ENCODE measurements at regions of chr6 and their contacts with region 1.

Region 1: DNA sequence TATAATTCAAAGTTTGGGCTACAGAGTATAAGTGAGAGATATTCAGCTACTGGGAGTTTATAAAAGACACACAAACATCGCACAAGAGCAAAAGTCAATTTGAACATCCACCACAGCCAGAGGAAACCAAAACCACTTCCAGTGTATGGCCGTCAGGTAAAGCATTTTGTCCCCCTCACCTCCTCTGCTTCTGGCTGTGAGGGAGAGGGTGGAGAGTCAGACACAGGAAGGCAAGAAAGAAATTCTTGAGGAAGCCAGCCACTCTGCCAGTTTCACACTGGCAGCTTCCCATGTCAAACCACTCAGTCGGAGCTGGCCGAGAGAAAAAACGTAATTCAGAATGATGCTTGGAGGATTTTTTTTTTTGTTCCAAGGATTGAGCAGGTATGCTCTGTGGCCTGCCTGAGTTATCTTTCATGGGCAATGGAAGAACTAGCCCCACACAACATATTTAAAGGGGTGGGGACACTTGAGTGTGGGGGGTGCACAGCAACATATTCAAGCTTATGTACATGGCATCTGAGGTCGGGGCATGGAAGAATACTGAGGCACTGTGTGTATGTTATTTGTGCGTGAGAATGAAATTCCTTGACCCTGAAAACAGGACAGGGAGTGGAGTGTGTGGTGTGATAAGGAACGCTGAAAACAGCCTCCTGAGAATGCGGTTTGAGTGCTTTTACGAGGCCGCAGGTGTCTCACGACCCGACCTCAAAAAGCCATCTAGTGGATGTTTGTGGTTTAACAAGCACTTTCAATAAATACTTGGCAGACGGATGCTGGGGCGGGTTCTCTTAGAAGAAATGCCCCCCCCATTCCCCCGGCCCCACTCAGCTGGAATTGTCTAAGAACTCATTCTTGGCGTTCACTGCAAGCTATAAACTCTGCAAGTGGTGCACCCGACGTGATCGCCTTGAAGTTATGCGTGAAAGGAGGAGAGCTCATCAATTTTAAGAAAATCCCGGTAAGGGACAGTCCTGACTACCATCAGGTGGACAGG is 27.5 kb upstream of the ZBTB22 start:
- DNase-seq: peak; percentile 31
- ATAC-seq: peak; percentile 35
- H3K4me3 Mint-ChIP-seq: peak overlapping the region; percentile 80
- H3K27ac Mint-ChIP-seq: peak overlapping the region; percentile 92
- H3K4me1 Mint-ChIP-seq: peaks cover 35% of the 10 kb centered on the region
- H3K27me3 Mint-ChIP-seq: no peaks in the 10 kb centered on the region
- CTCF ChIP-seq: no peak

Region 2: GRCh38 chr6:32933636-32934085 is 411.3 kb before region 1 on chr6:
- CTCF ChIA-PET with region 1: no interaction called
- POLR2A ChIA-PET with region 1: no interaction called
- intact Hi-C with region 1: no loop called
- DNase-seq: peak; percentile 60
- ATAC-seq: peak; percentile 54
- H3K4me3 Mint-ChIP-seq: no peak overlapping the region
- H3K27ac Mint-ChIP-seq: peak overlapping the region; percentile 79
- H3K4me1 Mint-ChIP-seq: peaks cover 92% of the 10 kb centered on the region
- H3K27me3 Mint-ChIP-seq: no peaks in the 10 kb centered on the region
- CTCF ChIP-seq: peak; percentile 65

Region 3: DNA sequence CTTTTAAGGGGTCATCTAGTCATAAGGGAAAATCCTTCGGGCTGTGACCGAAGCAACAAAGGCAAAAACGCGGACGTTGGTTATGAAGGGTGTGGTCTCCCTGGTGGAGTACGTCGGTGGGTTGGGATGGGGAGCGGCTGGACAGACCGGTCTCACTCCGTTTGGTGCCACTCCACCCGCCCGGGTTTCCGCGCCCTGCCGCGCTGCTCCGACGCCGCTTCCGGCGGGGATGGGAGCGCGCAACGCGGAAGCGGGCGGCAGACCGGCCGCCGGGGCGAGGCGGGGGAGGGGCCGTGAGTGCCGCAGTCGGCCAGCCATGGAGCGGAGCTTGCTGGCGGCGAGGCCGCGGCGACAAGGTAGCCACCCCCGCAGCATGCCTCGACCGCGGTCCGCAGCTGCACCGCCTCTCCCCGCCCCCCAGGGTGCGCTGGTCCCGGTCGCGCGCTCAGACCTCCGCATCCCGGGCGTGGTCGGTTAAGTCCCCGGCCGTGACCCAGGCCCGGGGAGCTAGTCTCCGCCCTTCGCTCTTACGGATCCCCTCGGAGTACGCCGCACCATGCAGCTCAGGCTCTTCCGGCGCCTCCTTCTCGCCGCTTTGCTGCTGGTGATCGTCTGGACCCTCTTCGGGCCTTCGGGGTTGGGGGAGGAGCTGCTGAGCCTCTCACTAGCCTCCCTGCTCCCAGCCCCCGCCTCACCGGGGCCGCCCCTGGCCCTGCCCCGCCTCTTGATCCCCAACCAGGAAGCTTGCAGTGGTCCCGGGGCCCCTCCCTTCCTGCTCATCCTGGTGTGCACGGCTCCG is 67.9 kb before region 1 on chr6 and contains the start of gene B3GALT4:
- CTCF ChIA-PET with region 1: interaction called, 19 read pairs
- POLR2A ChIA-PET with region 1: interaction called, 36 read pairs
- intact Hi-C with region 1: loop called (anchors 1 kb)
- DNase-seq: peak; percentile 77
- ATAC-seq: peak; percentile 68
- H3K4me3 Mint-ChIP-seq: peak within 1 kb of the TSS; percentile 92
- H3K27ac Mint-ChIP-seq: peak within 1 kb of the TSS; percentile 100
- H3K4me1 Mint-ChIP-seq: peaks cover 62% of the 10 kb centered on the region
- H3K27me3 Mint-ChIP-seq: no peaks in the 10 kb centered on the region
- CTCF ChIP-seq: no peak
- total RNA-seq, gene B3GALT4: 19.1 and 19.4 TPM in 2 replicates

Region 4: DNA sequence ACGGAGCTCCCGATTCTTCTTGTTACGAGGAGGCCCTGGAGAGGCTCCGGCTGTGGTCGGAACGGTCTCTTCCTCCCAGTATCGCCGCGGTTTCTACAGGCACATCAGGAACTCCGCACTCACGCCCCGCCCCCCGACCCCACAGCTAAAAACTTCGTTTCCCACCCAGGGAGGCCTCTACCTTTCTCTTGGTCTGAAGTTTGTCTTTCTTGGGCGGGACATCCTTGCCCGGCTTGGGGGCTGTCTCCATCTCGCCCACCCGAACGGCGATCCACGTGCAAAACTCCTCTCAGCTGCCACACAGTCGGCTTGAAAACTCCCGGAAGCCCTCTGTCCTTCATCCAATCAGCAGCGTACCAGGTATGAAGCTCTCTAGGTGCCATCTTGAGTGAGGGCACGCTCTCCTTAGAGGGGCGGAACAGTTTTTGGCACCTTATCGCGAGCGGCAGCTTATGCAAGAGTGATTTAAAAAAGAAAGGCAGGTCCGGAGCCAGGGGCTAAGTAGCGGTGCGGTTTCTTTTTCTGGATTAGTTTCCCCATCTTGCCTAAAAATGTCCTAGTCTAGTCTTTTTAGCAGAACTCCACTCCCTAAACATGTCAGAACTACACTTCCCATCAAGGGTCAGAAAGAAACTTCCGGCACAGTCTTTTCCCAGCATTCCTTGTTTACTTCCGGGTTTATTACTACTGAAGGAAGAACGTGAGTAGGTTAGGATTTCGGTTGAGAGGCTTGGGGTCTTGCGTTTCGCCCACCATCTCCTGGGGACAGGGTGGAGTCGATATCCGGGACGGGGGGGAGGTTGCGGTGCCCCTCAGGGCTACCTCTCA is 55.9 kb before region 1 on chr6 and contains the starts of genes PFDN6 and WDR46:
- CTCF ChIA-PET with region 1: interaction called, 7 read pairs
- POLR2A ChIA-PET with region 1: interaction called, 16 read pairs
- intact Hi-C with region 1: no loop called
- DNase-seq: peak; percentile 66
- ATAC-seq: peak; percentile 94
- H3K4me3 Mint-ChIP-seq: peak within 1 kb of the TSS; percentile 100
- H3K27ac Mint-ChIP-seq: peak within 1 kb of the TSS; percentile 95
- H3K4me1 Mint-ChIP-seq: peaks cover 48% of the 10 kb centered on the region
- H3K27me3 Mint-ChIP-seq: no peaks in the 10 kb centered on the region
- CTCF ChIP-seq: no peak
- total RNA-seq, gene PFDN6: 82.8 and 95.1 TPM in 2 replicates
- total RNA-seq, gene WDR46: 114 and 117 TPM in 2 replicates

Region 5: GRCh38 chr6:33323623-33323948 is 21.4 kb before region 1 on chr6:
- CTCF ChIA-PET with region 1: interaction called, 15 read pairs
- POLR2A ChIA-PET with region 1: interaction called, 102 read pairs
- intact Hi-C with region 1: loop called (anchors 1 kb)
- DNase-seq: peak; percentile 38
- ATAC-seq: no peak
- H3K4me3 Mint-ChIP-seq: peak overlapping the region; percentile 95
- H3K27ac Mint-ChIP-seq: peak overlapping the region; percentile 93
- H3K4me1 Mint-ChIP-seq: peaks cover 61% of the 10 kb centered on the region
- H3K27me3 Mint-ChIP-seq: no peaks in the 10 kb centered on the region
- CTCF ChIP-seq: no peak

Region 6: GRCh38 chr6:33329058-33329457 is 15.9 kb before region 1 on chr6:
- CTCF ChIA-PET with region 1: interaction called, 10 read pairs
- POLR2A ChIA-PET with region 1: interaction called, 23 read pairs
- intact Hi-C with region 1: no loop called
- DNase-seq: no peak
- ATAC-seq: no peak
- H3K4me3 Mint-ChIP-seq: no peak overlapping the region
- H3K27ac Mint-ChIP-seq: peak overlapping the region; percentile 57
- H3K4me1 Mint-ChIP-seq: peaks cover 49% of the 10 kb centered on the region
- H3K27me3 Mint-ChIP-seq: no peaks in the 10 kb centered on the region
- CTCF ChIP-seq: no peak

Region 7: DNA sequence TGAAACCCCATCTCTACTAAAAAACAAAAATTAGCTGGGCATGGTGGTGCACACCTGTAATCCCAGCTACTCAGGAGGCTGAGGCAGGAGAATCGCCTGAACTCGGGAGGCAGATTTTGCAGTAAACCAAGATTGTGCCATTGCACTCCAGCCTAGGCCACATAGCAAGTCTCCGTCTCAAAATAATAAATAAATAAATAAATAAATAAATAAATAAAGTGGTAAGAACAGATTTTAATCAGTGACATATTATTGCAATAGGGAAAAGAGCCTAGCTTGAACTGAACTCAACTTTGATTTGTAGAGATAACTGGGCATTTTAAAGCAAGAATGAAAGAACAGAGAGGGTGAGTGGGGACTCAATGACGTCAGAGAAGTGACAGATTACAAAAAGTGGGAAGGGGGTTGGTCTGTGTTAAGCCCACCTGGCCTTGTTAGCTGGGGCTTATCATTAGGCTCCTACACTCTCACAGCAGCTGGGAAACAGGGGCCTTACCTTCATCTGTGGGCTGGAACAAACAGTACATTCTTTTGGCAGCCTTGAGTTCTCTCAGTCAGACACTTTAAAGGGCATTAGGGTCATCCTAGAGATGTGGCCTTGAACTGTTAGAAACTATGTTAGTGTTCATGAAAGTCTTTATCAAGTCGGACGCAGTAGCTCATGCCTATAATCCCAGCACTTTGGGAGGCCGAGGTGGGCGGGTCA is 22.2 kb after region 1 on chr6:
- CTCF ChIA-PET with region 1: no interaction called
- POLR2A ChIA-PET with region 1: no interaction called
- intact Hi-C with region 1: no loop called
- DNase-seq: no peak
- ATAC-seq: no peak
- H3K4me3 Mint-ChIP-seq: no peak overlapping the region
- H3K27ac Mint-ChIP-seq: no peak overlapping the region
- H3K4me1 Mint-ChIP-seq: no peaks in the 10 kb centered on the region
- H3K27me3 Mint-ChIP-seq: no peaks in the 10 kb centered on the region
- CTCF ChIP-seq: no peak

Region 8: DNA sequence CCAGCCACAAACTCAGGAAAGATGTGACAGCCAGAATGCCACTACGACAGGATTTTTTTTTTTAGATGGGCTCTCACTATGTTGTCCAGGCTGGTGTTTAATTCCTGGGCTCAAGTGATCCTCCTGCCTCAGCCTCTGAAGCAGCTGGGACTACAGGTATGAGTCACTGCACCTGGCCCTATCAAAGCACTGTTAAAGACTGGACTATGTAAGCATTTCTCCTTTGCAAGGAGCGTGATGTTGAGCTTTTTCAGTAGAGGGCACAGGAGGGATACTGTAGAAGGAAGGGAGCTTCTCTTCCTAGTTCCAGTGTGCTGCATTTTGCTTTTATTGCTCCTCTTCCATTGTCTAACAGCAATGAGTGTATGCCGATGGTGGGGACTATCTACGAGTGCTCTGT is 145.2 kb after region 1 on chr6:
- CTCF ChIA-PET with region 1: no interaction called
- POLR2A ChIA-PET with region 1: no interaction called
- intact Hi-C with region 1: no loop called
- DNase-seq: no peak
- ATAC-seq: no peak
- H3K4me3 Mint-ChIP-seq: no peak overlapping the region
- H3K27ac Mint-ChIP-seq: no peak overlapping the region
- H3K4me1 Mint-ChIP-seq: peaks cover 4% of the 10 kb centered on the region
- H3K27me3 Mint-ChIP-seq: peaks cover 3% of the 10 kb centered on the region
- CTCF ChIP-seq: no peak